ENCODE measurements at regions of chr5 and their contacts with region 1.

Region 1: DNA sequence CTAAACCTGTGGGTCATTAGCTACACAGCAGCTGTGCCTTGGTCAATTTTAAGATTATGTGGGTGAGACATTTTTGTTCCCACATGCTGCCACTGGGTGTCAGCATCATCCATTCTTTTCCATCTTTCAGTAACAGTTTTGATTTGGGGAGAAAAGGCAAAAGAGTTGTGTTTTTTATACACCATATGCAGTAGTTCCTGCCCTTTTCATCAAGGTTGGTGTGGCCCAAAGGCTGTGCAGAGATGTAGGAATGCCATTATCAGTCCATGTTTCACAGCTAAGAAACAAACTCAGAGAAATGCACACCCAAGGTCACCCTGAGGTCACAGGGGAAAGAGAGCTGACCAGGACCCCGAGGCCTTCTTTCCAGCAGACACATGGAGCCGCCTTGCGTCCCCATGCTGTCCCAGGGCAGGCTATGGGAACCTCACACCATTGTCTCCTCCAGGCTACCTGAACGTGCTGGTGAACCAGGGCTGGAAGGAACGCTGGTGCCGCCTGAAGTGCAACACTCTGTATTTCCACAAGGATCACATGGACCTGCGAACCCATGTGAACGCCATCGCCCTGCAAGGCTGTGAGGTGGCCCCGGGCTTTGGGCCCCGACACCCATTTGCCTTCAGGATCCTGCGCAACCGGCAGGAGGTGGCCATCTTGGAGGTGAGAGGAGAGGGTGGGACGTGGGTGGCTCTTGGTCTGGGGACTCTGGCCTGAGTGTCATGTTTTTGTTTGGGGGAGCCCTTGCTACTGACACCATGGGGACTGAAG is 27.8 kb upstream of the GRPEL2 start:
- DNase-seq: no peak
- H3K4me3 ChIP-seq: no peak overlapping the region
- H3K27ac ChIP-seq: no peak overlapping the region; the same call in 1 of the 2 replicates
- H3K4me1 ChIP-seq: peaks cover 0 to 4% (median 1%) of the 10 kb centered on the region in 4 experiments; a peak in 4 of 7 replicates
- H3K27me3 ChIP-seq: no peaks in the 10 kb centered on the region
- CTCF ChIP-seq: peak in 2 of 3 experiments; percentile 63 to 67; a peak in 3 of 4 replicates
- EP300 ChIP-seq: no peak
- POLR2A ChIP-seq: no peak
- RAD21 ChIP-seq: peak; percentile 68 to 75

Region 2: DNA sequence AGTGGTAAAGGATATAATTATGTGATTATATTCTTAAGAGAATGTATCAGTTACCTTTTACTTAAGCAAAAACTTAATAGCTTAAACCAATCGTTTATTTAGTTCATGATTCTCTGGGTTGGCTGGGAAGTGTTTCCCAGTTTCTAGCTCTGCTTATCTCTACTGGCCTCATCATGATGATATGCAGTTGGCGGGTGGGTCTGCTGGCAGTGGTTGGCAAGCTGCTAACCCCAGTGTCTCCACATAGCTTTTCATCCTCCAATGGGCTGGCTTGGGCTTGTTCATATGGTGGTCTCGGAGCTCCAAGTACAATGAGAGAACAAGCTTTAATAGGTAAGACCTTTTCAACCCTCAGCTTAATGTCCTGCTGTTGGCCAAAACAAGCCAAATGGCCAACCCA is 132.4 kb before region 1 on chr5:
- CTCF ChIA-PET with region 1: no interaction called
- POLR2A ChIA-PET with region 1: no interaction called
- DNase-seq: no peak
- H3K4me3 ChIP-seq: no peak overlapping the region
- H3K27ac ChIP-seq: no peak overlapping the region
- H3K4me1 ChIP-seq: no peaks in the 10 kb centered on the region
- H3K27me3 ChIP-seq: peaks cover 0 to 1% (median 0%) of the 10 kb centered on the region in 4 experiments; a peak in 1 of 7 replicates
- CTCF ChIP-seq: no peak
- EP300 ChIP-seq: no peak
- POLR2A ChIP-seq: no peak
- RAD21 ChIP-seq: no peak

Region 3: DNA sequence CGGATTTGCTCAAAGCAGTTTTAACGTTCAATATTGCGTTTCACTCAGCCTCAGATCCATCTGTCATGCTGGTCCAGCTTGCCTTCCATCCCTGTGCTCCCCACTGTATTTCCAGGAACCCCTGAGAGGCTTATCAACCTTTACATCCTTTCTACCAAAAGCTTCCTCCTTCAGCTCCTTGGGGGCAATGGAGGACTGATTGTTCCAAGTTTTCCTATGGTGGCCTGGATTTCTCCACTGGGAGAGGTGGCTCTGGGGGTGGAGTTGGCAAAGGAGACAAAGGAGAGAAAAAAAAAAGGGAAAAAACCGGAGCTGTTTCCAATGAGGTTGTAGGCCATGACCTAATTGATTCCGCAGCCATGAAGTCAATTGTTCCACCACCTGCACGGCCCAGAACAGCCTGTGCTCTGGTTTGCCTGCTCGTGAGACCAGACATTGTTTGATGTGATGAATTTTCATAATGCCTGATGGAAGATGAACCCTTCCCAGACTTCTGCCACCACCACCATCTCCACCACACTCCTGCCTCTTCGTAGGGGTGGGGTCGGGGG is 122.1 kb before region 1 on chr5:
- CTCF ChIA-PET with region 1: no interaction called
- POLR2A ChIA-PET with region 1: no interaction called
- DNase-seq: peak in 1 of 2 experiments; percentile 24
- H3K4me3 ChIP-seq: no peak overlapping the region
- H3K27ac ChIP-seq: no peak overlapping the region
- H3K4me1 ChIP-seq: no peaks in the 10 kb centered on the region
- H3K27me3 ChIP-seq: no peaks in the 10 kb centered on the region; a peak in 1 of 7 replicates
- CTCF ChIP-seq: no peak
- EP300 ChIP-seq: no peak
- POLR2A ChIP-seq: no peak
- RAD21 ChIP-seq: no peak

Region 4: GRCh38 chr5:149304195-149305078 is 13.0 kb before region 1 on chr5:
- CTCF ChIA-PET with region 1: interaction called, 24 read pairs
- POLR2A ChIA-PET with region 1: interaction called, 3 read pairs
- DNase-seq: no peak
- H3K4me3 ChIP-seq: no peak overlapping the region
- H3K27ac ChIP-seq: no peak overlapping the region
- H3K4me1 ChIP-seq: no peaks in the 10 kb centered on the region; a peak in 1 of 7 replicates
- H3K27me3 ChIP-seq: no peaks in the 10 kb centered on the region
- CTCF ChIP-seq: no peak
- EP300 ChIP-seq: no peak
- POLR2A ChIP-seq: no peak
- RAD21 ChIP-seq: no peak

Region 5: GRCh38 chr5:149333711-149334443 is 16.4 kb after region 1 on chr5:
- CTCF ChIA-PET with region 1: interaction called, 28 read pairs
- POLR2A ChIA-PET with region 1: no interaction called
- DNase-seq: no peak
- H3K4me3 ChIP-seq: no peak overlapping the region
- H3K27ac ChIP-seq: no peak overlapping the region
- H3K4me1 ChIP-seq: no peaks in the 10 kb centered on the region
- H3K27me3 ChIP-seq: no peaks in the 10 kb centered on the region
- CTCF ChIP-seq: no peak
- EP300 ChIP-seq: no peak
- POLR2A ChIP-seq: no peak
- RAD21 ChIP-seq: no peak